Mammary epithelial cell (primary cell): ENCODE measurements at regions of chr7 and their contacts with region 1.

Region 1: GRCh38 chr7:94649450-94649849 is 6.5 kb downstream of the SGCE start:
- DNase-seq: peak; percentile 66
- H3K4me3 ChIP-seq: peak overlapping the region; percentile 33 to 65 (median 36)
- H3K27ac ChIP-seq: peak overlapping the region; percentile 74
- H3K4me1 ChIP-seq: peaks cover 29% of the 10 kb centered on the region
- H3K27me3 ChIP-seq: no peaks in the 10 kb centered on the region
- CTCF ChIP-seq: no peak

Region 2: DNA sequence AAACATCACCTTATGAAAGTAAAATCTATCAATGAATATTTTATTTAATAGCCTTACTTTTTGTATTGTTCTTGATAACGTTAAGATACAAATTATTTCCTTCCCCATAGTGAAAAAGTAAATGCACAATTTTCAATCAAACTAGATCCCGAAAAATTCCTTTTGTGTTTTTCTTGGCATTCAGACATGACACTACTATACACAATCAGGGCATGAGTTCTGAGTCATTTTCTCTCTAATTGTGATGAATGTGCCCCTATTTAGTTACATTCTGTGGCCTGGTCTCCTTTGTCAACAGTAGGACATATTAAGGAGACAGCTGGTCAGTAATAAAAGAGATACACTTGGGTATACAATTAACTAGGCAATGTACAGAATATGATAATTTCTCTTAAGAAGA is 235.0 kb before region 1 on chr7:
- CTCF ChIA-PET with region 1: no interaction called
- dilution Hi-C with region 1: no loop called
- in situ Hi-C with region 1: no loop called
- intact Hi-C with region 1: no loop called
- DNase-seq: no peak
- H3K4me3 ChIP-seq: no peak overlapping the region
- H3K27ac ChIP-seq: no peak overlapping the region
- H3K4me1 ChIP-seq: no peaks in the 10 kb centered on the region
- H3K27me3 ChIP-seq: no peaks in the 10 kb centered on the region
- CTCF ChIP-seq: no peak

Region 3: DNA sequence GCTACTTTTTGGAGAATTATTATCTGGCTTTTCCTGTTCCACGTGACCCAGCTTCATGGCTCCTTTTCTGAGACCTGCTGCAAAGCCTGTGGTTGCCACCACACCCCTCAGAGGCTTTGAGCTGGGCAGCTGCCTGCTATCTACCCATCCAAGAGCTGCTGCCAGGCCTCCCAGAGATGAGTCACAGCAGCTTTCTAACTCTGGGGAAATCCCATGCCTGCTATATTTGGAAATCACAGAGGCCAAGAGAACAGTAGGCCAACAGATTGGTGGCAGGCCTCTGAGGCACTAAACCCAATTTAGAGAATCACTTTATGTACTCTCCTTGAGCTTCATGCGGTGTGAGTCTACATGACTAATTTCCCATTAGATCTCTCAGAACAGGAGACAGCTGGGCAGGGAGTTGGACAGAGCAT is 28.7 kb before region 1 on chr7:
- CTCF ChIA-PET with region 1: no interaction called
- dilution Hi-C with region 1: no loop called
- in situ Hi-C with region 1: no loop called
- intact Hi-C with region 1: loop called (anchors 2 kb)
- DNase-seq: peak; percentile 99
- H3K4me3 ChIP-seq: no peak overlapping the region
- H3K27ac ChIP-seq: peak overlapping the region; percentile 56
- H3K4me1 ChIP-seq: peaks cover 13% of the 10 kb centered on the region
- H3K27me3 ChIP-seq: no peaks in the 10 kb centered on the region
- CTCF ChIP-seq: no peak